ENCODE measurements at regions of chr5 and their contacts with region 1.

Region 1: DNA sequence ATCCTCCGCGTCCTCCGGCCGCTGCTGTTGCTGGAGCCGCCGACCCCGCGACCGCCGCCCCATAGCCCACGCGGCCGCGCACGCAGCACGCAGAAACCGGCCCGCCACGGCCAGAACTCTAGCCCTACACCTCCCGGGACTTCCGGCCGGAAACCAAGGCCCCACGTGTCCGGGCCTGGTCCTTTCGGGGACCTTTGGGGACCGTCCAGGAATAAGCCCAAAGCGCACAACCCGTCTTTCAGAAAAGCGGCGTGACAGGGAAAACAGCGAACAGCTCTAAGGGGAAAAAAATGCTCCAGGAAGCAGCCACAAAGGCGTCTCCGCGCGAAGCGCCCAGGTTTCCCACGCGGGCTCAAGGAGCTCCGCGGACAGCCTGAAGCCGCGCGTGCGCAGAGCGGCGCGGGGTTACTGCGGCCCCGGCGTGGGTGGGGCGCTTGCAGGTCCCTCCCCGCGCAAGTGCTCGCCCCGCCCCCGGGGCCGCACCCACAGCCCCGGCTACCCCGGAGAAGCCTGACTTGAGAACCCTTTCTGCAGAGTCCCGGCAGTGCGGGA is at the starts of genes NSUN2 and SRD5A1:
- DNase-seq: peak; percentile 93
- H3K4me3 Mint-ChIP-seq: peak within 1 kb of the TSS; percentile 96
- H3K27ac Mint-ChIP-seq: peak within 1 kb of the TSS; percentile 93
- H3K4me1 Mint-ChIP-seq: peaks cover 64% of the 10 kb centered on the region
- H3K27me3 Mint-ChIP-seq: no peaks in the 10 kb centered on the region
- total RNA-seq, gene NSUN2: 63.5 to 73.3 TPM
- total RNA-seq, gene SRD5A1: 10.2 to 12.4 TPM

Region 2: DNA sequence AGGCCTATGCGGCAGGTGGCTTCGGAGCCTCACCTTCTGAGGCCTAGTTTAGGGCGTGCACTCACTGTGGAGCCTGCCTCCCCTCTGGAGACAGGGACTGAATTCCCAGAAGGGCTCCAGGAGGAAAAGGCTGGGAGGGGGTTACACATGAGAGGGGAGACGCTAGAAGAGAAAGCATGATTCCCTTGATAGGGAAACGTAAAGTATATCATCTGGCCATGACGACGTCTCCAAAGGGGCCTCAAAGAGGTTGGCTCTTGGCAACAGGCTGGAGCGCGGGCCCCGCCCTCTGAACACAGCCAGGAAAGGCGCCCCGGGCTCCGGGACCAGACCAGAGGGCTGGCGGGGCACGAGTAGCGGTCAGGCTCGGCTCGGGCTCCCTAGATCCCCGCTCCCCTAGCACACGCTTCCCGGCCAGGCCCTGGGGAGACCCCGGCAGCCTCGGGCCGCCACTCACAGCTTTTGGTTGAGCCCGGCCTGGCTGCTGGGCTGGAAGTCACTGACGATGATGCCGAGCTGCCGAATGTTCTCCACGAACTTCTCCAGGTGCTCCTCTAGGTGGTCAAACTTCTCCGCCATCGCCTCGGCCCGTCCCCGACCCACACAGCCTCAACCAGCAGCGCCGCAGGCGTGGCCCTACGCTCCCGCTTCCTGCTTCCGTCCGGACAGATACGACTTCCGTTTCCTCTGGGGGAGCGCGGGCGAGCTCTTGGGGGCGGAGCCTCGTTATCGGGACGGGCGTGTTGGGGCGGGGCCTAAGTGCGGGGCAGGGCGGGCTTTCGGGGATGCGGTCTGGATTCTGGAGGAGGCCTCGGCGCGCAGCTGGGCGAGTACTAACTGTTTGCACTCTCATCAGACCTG is 254.9 kb before region 1 on chr5 and contains the start of gene MED10:
- CTCF ChIA-PET with region 1: interaction called, 3 read pairs
- POLR2A ChIA-PET with region 1: interaction called, 12 read pairs
- DNase-seq: peak; percentile 97
- H3K4me3 Mint-ChIP-seq: peak within 1 kb of the TSS; percentile 94
- H3K27ac Mint-ChIP-seq: peak within 1 kb of the TSS; percentile 93
- H3K4me1 Mint-ChIP-seq: peaks cover 46% of the 10 kb centered on the region
- H3K27me3 Mint-ChIP-seq: peaks cover 4% of the 10 kb centered on the region
- total RNA-seq, gene MED10: 50.1 to 52.9 TPM

Region 3: GRCh38 chr5:6615034-6615815 is 17.8 kb before region 1 on chr5:
- CTCF ChIA-PET with region 1: no interaction called
- POLR2A ChIA-PET with region 1: interaction called, 10 read pairs
- DNase-seq: no peak
- H3K4me3 Mint-ChIP-seq: no peak overlapping the region
- H3K27ac Mint-ChIP-seq: no peak overlapping the region
- H3K4me1 Mint-ChIP-seq: peaks cover 7% of the 10 kb centered on the region
- H3K27me3 Mint-ChIP-seq: no peaks in the 10 kb centered on the region

Region 4: DNA sequence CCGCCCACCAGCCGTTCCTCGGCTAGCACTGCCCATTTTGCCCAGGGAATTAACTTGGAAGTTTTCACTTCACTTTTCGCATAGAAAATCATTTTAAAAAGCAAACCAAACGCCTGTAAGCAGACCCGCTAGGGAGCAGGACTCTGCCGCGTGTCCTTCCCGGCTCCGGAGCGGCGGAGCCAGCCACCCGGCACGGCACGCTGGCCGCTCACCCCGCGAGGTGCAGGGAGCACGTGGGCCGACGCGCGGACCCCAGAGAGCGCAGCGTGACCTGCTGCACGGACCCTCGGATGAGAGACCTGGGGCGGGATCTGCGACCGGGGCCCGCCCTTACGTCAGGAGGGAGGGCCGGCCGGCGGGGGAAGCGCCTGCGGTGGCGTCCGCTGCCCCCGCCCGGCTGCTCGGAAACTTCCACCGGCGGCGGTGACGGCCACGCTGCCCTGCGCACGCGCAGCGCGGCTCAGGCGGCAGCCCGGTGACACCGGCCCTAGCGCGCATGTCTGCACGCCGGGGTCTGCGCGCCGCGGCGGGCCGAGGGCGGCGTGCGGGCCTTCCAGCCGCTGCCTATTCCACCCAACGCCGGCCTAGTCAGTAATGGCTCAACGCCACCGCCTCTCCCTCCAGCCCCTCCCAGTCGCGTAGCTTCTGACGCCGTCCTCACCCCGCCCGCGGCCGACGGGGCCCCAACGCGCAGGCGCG is 79.7 kb after region 1 on chr5:
- CTCF ChIA-PET with region 1: interaction called, 8 read pairs
- POLR2A ChIA-PET with region 1: interaction called, 63 read pairs
- DNase-seq: peak; percentile 98
- H3K4me3 Mint-ChIP-seq: peak overlapping the region; percentile 85
- H3K27ac Mint-ChIP-seq: peak overlapping the region; percentile 92
- H3K4me1 Mint-ChIP-seq: peaks cover 41% of the 10 kb centered on the region
- H3K27me3 Mint-ChIP-seq: peaks cover 6% of the 10 kb centered on the region

Region 5: GRCh38 chr5:6718161-6718681 is 85.2 kb after region 1 on chr5:
- CTCF ChIA-PET with region 1: interaction called, 4 read pairs
- POLR2A ChIA-PET with region 1: interaction called, 63 read pairs
- DNase-seq: no peak
- H3K4me3 Mint-ChIP-seq: no peak overlapping the region
- H3K27ac Mint-ChIP-seq: no peak overlapping the region
- H3K4me1 Mint-ChIP-seq: peaks cover 68% of the 10 kb centered on the region
- H3K27me3 Mint-ChIP-seq: no peaks in the 10 kb centered on the region

Region 6: GRCh38 chr5:6728011-6728794 is 95.2 kb after region 1 on chr5:
- CTCF ChIA-PET with region 1: interaction called, 5 read pairs
- POLR2A ChIA-PET with region 1: interaction called, 27 read pairs
- DNase-seq: no peak
- H3K4me3 Mint-ChIP-seq: no peak overlapping the region
- H3K27ac Mint-ChIP-seq: no peak overlapping the region
- H3K4me1 Mint-ChIP-seq: peaks cover 77% of the 10 kb centered on the region
- H3K27me3 Mint-ChIP-seq: no peaks in the 10 kb centered on the region

Region 7: DNA sequence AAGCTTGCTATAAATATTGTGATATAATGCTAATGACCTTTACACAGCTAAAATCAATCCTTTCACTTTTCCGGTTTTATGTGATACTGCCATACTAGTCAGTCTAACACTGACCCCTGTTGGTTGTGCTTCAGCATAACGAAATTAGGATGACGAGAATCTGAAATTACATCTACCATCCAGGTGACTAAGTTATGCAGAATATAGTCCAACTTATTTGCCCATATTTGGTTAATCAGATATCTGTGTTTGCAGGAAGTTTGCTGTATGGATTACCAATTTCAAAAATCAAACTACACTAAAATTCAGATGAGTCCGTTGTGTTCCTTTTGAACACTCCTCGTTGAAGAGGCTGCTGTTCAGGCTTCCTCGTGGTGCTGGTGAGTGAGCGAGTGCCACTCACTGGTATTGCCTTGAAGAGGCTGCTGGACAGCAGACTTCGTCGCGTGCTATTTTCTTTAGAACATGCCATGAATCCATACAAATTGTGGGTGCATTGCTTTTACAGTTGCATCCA is 112.8 kb after region 1 on chr5:
- CTCF ChIA-PET with region 1: interaction called, 13 read pairs
- POLR2A ChIA-PET with region 1: interaction called, 6 read pairs
- DNase-seq: no peak
- H3K4me3 Mint-ChIP-seq: no peak overlapping the region
- H3K27ac Mint-ChIP-seq: no peak overlapping the region
- H3K4me1 Mint-ChIP-seq: peaks cover 3% of the 10 kb centered on the region
- H3K27me3 Mint-ChIP-seq: no peaks in the 10 kb centered on the region

Measured in activated CD4-positive, alpha-beta memory T cell treated with anti-CD3 and anti-CD28 coated beads, Interleukin-2, amount 10 ng/mL, durations not matched to agents 7 days and 5 days (primary cell).